Posterior vena cava (tissue), 2 donors: ENCODE measurements at regions of chr11 and their contacts with region 1.

Region 1: GRCh38 chr11:503179-503981 is 3.7 kb downstream of the RNH1 start:
- DNase-seq: peak; percentile 89

Region 2: DNA sequence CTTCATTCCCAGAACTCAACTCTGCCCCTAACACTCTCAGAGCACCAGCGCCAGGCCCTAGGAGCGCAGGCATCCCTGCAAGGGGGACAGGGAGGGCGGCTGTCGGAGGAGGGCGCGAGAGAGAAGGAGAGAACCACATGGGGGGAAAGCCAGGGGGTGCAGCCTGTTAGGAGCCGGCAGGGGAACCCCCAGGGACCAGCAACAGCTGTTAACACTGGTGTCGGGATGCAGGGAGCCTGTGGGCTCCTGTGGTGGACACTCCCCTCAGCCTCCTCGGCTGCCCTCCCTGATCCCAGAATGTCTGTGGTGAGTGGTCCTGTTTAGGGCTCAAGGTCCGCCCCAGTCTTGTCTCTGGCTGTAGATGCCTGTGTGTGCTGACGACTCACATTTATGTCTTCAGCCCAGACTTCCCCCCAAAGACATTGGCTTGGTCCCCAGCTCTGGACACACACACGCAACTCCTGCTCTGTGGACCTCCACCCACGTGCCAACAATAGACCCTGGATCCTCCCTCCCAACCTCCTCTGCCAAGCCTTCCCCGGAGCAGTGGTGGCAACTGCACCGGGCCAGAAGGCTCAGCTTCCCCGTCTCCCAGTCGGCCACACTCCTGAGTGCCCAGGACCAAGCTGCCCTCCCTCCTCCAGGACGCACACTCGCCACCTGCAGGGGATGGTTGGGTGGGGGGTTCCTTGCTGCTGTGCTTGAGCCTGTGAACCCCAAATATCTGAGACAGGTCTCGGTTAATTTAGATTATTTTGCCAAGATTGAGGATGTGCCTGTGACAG is 203.2 kb before region 1 on chr11:
- intact Hi-C with region 1: loop called in 1 of 2 experiments (anchors 5 kb)
- DNase-seq: peak; percentile 78

Region 3: GRCh38 chr11:535519-536454 is 32.4 kb after region 1 on chr11 and contains the start of gene HRAS:
- intact Hi-C with region 1: no loop called
- DNase-seq: peak; percentile 98
- total RNA-seq, gene HRAS: 37.2 to 48.5 TPM

Region 4: DNA sequence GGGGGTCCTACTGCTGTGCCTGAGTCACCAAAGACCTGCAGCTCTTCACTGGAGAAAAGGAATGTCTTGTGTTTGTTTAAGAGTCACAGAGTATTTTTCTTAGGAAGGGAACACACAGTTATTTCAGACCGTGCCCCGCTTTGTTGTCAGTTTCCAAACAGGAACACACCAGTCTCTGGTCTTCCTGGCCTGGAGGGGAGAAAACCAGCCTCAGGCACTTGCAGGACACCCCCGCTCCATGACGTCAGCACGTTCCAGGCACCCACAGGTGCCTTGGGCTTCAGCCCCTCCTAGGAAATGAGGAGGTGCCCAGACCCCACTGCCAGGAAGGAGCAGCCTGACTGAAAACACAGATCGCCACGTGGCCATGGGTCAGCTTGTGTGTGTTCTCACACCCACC is 186.2 kb after region 1 on chr11:
- intact Hi-C with region 1: no loop called
- DNase-seq: no peak